ENCODE measurements at regions of chr5 and their contacts with region 1.

Region 1: DNA sequence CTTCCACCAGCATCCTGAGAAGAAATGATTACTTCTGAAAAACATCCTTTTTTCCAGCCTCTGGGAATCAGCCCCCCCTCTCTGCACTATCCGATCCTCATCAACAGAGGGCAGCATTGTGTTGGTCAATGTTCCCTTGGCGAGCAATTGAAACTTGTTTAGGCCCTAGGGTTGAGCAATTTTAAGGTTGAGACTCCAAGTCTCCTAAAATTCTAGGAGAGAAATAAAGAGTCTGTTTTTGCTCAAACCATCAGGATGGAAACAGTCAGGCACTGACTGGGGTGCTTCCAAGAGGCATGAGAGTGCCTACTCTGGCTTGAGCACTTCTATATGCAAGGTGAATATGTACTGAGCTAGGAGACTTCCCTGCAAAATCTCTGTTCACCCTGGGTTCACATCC is 12.4 kb upstream of the CYFIP2 start:
- DNase-seq: peak in 1 of 2 donors; percentile 42
- H3K4me3 ChIP-seq: no peak overlapping the region
- H3K27ac ChIP-seq: no peak overlapping the region
- H3K4me1 ChIP-seq: no peaks in the 10 kb centered on the region
- H3K27me3 ChIP-seq: no peaks in the 10 kb centered on the region
- CTCF ChIP-seq: peak; percentile 73 to 84

Region 2: DNA sequence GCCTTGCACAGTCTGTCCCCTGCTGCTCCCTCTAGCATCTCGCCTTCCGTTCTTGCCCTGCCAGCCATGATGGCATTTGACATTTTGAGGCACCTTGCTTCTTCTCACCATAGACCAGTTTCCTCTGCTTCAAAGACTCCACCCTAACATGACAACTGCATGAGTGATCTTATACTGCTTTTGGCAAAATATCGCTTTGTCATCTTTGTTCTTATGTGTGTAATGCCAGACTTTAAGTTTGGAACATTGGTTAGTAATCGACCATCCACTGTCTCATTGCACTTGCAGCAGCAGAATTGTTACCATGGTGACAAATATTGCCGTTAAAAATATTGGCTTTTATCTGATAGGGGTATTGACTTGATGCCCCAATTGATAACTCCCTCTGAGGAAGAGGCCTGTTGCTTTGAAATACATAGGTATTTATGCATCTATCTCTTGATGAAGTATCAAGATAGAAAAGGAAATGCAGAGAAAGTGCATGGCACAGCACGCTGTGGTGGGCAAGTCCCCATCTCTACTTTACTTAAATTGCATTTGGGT is 94.3 kb before region 1 on chr5:
- intact Hi-C with region 1: loop called (anchors 10 kb)
- DNase-seq: no peak
- H3K4me3 ChIP-seq: no peak overlapping the region
- H3K27ac ChIP-seq: no peak overlapping the region
- H3K4me1 ChIP-seq: no peaks in the 10 kb centered on the region
- H3K27me3 ChIP-seq: peaks cover 0 to 11% of the 10 kb centered on the region in 2 donors
- CTCF ChIP-seq: no peak

Region 3: GRCh38 chr5:157308836-157309465 is 55.4 kb after region 1 on chr5:
- intact Hi-C with region 1: loop called (anchors 5 kb)
- DNase-seq: no peak
- H3K4me3 ChIP-seq: no peak overlapping the region
- H3K27ac ChIP-seq: peak overlapping the region in 1 of 2 donors; percentile 22
- H3K4me1 ChIP-seq: peaks cover 0 to 11% (median 3%) of the 10 kb centered on the region in 4 donors
- H3K27me3 ChIP-seq: no peaks in the 10 kb centered on the region
- CTCF ChIP-seq: peak in 1 of 2 experiments; percentile 6

Region 4: GRCh38 chr5:157384971-157385709 is 131.6 kb after region 1 on chr5:
- intact Hi-C with region 1: no loop called
- DNase-seq: peak; percentile 75 to 87
- H3K4me3 ChIP-seq: peak overlapping the region; percentile 9 to 57
- H3K27ac ChIP-seq: peak overlapping the region; percentile 89 to 92
- H3K4me1 ChIP-seq: peaks cover 0 to 92% (median 22%) of the 10 kb centered on the region in 4 donors
- H3K27me3 ChIP-seq: no peaks in the 10 kb centered on the region
- CTCF ChIP-seq: no peak

Measured in tibial artery (tissue), 4 donors.